GM10248 (cell line): ENCODE measurements at regions of chr20 and their contacts with region 1.

Region 1: DNA sequence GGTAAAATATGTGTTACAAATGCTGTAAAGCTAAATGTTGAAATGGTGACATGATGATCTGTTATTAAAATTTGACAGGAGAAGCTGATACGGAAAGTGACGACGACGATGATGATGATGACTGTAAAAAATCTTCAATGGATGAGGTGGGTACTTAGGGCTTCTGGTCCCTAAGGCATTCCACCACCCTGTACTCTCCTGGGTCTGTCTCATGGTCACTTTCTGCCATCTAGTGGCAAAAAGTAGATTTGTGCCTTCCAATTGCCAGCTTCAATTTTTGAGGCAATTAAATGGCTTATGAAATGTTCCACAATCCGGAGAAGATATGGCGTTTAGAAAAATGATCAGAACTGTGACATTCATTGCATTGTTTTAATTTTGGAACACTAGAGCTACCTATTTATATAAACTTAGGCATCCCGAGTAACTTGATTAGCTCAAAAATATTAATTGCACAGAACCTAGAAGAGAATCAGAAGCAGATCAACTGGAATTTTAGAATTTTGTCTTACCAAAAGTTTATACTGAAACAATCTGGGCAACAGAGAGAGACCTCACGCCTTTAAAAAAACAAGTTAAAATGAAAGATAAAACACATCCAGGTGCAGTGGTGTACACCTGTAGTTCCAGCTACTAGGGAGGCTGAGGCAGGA is 346.5 kb upstream of the PLCB4 start:
- DNase-seq: peak; percentile 31
- CTCF ChIP-seq: peak; percentile 73

Region 2: DNA sequence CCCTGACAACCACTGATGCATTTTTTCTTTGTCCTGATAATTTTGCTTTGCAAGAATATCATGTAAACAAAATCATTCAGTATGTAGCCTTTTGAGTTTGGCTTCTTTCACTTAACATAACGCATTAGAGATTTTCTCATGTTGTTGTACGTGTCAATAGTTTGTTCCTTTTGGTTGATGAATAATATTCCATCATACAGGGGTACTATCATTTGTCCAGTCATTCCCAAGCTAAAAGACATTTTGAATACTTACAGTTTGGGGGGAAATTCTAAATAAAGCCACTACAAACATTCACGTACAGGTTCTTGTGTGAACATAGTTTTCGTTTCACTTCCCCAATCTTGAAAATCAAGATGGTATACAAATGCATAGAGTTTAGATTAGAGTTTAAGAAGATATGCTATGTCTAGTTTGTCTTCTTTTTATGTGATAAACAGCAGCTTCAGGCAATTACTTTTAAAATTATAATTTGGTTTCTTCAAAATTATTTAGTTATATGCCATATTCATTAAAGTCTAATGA is 787.3 kb before region 1 on chr20:
- CTCF ChIA-PET with region 1: interaction called, 60 read pairs
- POLR2A ChIA-PET with region 1: no interaction called
- DNase-seq: peak; percentile 32
- CTCF ChIP-seq: no peak

Region 3: DNA sequence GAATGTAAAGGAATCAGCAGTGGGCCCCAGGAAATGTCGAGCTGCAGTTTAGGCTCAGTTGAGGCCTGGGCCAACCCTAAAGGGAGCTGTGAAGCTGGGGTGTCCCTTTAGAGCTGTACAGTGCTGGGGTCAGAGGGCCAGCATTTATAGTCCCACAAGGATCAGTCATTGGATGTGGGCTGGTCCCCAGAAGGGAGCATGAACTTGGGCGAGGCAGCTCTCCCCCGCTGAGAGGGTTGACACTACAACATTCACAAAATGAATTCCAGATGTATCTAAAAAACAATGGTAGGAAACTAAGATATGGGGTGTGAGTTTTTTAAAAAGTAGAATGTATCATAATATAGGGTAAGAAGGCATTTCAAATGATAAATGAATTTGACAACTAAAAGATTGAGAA is 673.1 kb before region 1 on chr20:
- CTCF ChIA-PET with region 1: interaction called, 129 read pairs
- POLR2A ChIA-PET with region 1: no interaction called
- DNase-seq: no peak
- CTCF ChIP-seq: no peak

Region 4: GRCh38 chr20:8464368-8464767 is 258.0 kb before region 1 on chr20:
- CTCF ChIA-PET with region 1: no interaction called
- POLR2A ChIA-PET with region 1: no interaction called
- DNase-seq: no peak
- CTCF ChIP-seq: no peak

Region 5: DNA sequence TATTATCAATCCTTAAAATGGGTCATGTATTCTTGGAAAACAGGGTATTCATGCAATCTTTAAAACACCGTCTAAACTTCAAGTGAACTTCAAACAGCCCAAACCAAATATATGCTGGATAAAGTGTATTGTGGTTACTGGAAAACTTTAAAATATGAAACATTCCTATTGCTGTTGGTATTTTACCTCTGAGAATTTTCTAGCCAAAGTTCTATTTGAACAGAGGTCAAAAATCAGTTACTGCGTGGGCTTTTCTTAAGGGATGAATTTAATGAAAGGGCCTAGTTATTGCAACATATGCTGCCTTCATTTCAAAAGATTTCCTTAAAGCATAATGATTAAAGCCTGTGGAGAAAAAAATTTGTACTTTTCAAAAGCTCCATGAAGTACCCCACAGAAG is 154.3 kb before region 1 on chr20:
- CTCF ChIA-PET with region 1: no interaction called
- POLR2A ChIA-PET with region 1: no interaction called
- DNase-seq: no peak
- CTCF ChIP-seq: no peak

Region 6: GRCh38 chr20:8667306-8667705 is 55.1 kb before region 1 on chr20:
- CTCF ChIA-PET with region 1: interaction called, 10 read pairs
- POLR2A ChIA-PET with region 1: no interaction called
- DNase-seq: no peak
- CTCF ChIP-seq: no peak

Region 7: GRCh38 chr20:8744228-8744844 is 21.9 kb after region 1 on chr20:
- CTCF ChIA-PET with region 1: interaction called, 12 read pairs
- POLR2A ChIA-PET with region 1: no interaction called
- DNase-seq: no peak
- CTCF ChIP-seq: no peak

Region 8: GRCh38 chr20:9488063-9488462 is 765.7 kb after region 1 on chr20:
- CTCF ChIA-PET with region 1: no interaction called
- POLR2A ChIA-PET with region 1: no interaction called
- DNase-seq: no peak
- CTCF ChIP-seq: no peak